ENCODE measurements at regions of chr2 and their contacts with region 1.

Region 1: DNA sequence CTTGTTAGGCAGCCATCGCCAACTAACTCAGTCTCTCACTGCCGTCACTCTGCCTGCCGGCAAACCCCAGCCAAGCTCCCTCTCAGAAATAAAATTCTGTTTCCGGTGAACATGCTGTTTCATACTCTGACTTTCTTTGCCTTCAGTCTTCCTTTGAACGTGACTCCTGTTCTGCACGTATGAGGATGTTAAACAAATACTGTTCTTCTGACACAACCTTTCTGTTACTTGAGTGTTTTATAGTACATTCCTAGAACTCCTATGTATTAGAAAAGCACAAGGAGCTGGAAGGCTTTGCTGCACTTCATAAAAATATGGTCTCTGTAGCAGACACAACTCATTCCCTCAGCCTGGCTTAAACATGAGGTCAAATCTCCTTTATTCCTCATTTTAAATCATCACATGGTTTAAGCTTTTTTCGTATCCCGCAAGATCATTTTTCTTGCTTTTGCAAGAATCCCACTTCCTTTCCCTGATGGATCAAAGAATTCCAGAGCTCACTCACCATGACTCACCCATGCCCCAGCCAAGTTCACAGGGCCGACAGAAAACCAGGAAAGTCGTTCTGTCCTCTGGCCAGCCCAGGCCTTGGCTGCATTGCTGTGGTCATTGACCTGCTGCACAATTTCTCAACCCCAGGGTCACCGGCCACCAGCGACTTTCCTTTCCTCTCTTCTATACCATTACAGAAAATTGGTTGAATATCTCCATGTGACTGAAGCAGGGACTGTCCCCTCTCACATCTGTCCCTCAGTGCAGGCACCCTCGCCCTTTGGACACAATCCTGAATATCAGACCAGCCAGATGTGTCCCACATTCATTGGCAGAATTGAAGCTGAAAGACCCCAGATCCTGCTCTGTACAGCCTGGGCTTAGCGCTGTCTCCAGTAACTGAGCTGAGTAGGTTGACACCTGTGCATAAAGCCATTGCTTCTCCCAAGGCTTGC is 183.1 kb upstream of the ARL4C start:
- DNase-seq: no peak
- H3K4me3 Mint-ChIP-seq: no peak overlapping the region
- H3K27ac Mint-ChIP-seq: no peak overlapping the region
- H3K4me1 Mint-ChIP-seq: no peaks in the 10 kb centered on the region
- H3K27me3 Mint-ChIP-seq: no peaks in the 10 kb centered on the region

Region 2: DNA sequence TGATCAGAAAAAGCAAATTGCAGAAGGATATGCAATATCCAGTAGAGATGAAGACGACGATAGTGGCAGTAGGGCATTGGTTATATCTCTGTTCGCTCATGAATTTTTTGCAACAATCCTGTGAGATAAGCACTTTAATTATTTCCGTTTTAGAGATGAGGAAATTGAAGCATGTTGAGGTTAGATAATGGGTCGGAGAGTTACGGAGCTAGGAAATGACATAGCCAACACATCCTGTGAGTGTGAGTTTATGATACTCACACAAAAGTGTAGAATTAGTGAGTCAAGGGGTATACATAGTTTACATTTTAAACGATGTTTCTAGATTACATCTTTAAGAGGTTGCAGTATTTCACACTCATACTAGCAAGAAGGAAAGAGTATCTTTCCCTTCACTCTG is 60.0 kb before region 1 on chr2:
- CTCF ChIA-PET with region 1: no interaction called
- intact Hi-C with region 1: no loop called
- DNase-seq: no peak
- H3K4me3 Mint-ChIP-seq: no peak overlapping the region
- H3K27ac Mint-ChIP-seq: no peak overlapping the region
- H3K4me1 Mint-ChIP-seq: peaks cover 6% of the 10 kb centered on the region
- H3K27me3 Mint-ChIP-seq: peaks cover 2% of the 10 kb centered on the region

Region 3: GRCh38 chr2:234643407-234643806 is 36.6 kb before region 1 on chr2:
- CTCF ChIA-PET with region 1: no interaction called
- intact Hi-C with region 1: no loop called
- DNase-seq: no peak
- H3K4me3 Mint-ChIP-seq: no peak overlapping the region
- H3K27ac Mint-ChIP-seq: no peak overlapping the region
- H3K4me1 Mint-ChIP-seq: no peaks in the 10 kb centered on the region
- H3K27me3 Mint-ChIP-seq: peaks cover 12% of the 10 kb centered on the region

Region 4: DNA sequence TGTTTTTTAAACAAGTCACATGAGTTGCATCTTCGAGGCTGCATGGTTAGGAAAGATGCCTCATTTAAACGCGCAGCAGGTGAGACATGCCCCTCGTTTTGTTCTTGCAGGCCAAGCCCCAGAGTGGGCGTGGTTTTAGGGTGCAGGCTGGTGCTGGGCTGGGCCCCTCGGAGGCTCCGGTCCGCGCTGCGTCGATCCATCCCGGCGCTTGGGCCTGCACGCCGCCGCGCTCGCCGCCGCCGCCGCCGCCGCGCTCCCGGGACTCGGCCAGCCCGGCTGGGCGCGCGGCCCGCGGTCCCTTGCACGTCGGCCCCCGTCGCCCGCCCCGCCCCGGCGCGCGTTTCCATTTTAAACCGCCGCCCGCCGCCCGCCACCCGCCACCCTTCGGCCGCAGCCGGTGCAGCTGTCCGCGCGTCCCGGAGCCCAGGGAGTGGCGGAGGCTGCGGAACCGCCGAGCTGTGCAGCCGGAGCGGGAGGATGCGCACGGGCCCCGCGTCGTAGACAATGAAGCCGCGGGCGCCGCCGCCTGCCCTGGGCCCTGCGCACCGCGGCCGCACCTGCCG is 989.3 kb after region 1 on chr2:
- CTCF ChIA-PET with region 1: no interaction called
- intact Hi-C with region 1: loop called (anchors 10 kb)
- DNase-seq: peak; percentile 9
- H3K4me3 Mint-ChIP-seq: no peak overlapping the region
- H3K27ac Mint-ChIP-seq: no peak overlapping the region
- H3K4me1 Mint-ChIP-seq: peaks cover 6% of the 10 kb centered on the region
- H3K27me3 Mint-ChIP-seq: peaks cover 50% of the 10 kb centered on the region